Activated naive CD4-positive, alpha-beta T cell treated with anti-CD3 and anti-CD28 coated beads, Interleukin-2, amount 10 ng/mL, durations not matched to agents 7 days and 5 days (primary cell): ENCODE measurements at regions of chr10 and their contacts with region 1.

Region 1: GRCh38 chr10:70363971-70364771 is 18.3 kb downstream of the LRRC20 start:
- DNase-seq: peak; percentile 90
- H3K4me3 Mint-ChIP-seq: no peak overlapping the region
- H3K27ac Mint-ChIP-seq: no peak overlapping the region
- H3K4me1 Mint-ChIP-seq: peaks cover 10% of the 10 kb centered on the region
- H3K27me3 Mint-ChIP-seq: no peaks in the 10 kb centered on the region

Region 2: GRCh38 chr10:70146489-70147258 is 217.5 kb before region 1 on chr10 and contains the start of gene TYSND1:
- CTCF ChIA-PET with region 1: interaction called, 15 read pairs
- DNase-seq: peak; percentile 97
- H3K4me3 Mint-ChIP-seq: peak within 1 kb of the TSS; percentile 80
- H3K27ac Mint-ChIP-seq: peak within 1 kb of the TSS; percentile 93
- H3K4me1 Mint-ChIP-seq: peaks cover 25% of the 10 kb centered on the region
- H3K27me3 Mint-ChIP-seq: no peaks in the 10 kb centered on the region

Region 3: DNA sequence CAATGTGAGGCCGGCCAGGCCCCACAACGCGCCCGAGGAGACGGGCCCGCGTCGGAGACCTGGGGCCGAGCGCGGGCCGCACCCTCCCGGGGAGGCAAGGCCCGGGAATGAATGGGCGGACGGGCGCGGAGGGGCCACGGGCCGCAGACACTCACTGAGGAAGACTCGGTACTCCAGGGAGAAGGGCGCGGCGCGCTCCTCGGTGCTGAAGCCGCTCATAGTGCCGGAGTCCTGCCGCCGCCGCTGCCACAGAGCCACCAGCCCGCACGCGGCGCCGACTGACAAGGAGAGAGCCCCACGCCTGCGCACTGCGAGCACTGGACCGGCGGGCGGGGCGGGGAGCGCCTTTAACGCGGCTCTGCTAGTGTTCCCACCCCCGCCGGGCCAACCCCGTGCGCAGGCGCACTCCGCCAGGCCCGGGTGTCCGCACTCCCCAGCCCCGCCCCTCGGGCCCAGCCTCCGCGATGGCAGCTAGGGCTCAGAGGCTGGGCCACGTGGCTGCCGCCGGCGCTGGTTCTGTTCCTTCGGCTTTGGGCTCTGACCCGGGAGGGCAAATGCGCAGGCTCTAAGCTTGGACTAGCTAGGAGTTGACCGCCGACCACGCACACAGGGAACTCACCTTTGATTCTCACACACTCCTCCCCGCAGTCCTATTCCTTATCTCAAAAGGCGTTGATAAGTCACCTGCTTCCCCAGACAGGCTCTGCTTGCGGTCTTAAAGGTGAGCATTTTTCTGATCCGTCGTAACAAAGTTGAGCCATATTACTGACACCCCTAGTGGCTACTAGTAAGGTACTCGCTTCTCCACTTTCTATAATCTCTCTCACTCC is 130.8 kb before region 1 on chr10 and contains the start of gene PPA1:
- CTCF ChIA-PET with region 1: interaction called, 21 read pairs
- DNase-seq: peak; percentile 99
- H3K4me3 Mint-ChIP-seq: peak within 1 kb of the TSS; percentile 73
- H3K27ac Mint-ChIP-seq: peak within 1 kb of the TSS; percentile 85
- H3K4me1 Mint-ChIP-seq: peaks cover 44% of the 10 kb centered on the region
- H3K27me3 Mint-ChIP-seq: no peaks in the 10 kb centered on the region

Region 4: GRCh38 chr10:70247360-70247759 is 116.8 kb before region 1 on chr10:
- CTCF ChIA-PET with region 1: no interaction called
- DNase-seq: no peak
- H3K4me3 Mint-ChIP-seq: no peak overlapping the region
- H3K27ac Mint-ChIP-seq: no peak overlapping the region
- H3K4me1 Mint-ChIP-seq: no peaks in the 10 kb centered on the region
- H3K27me3 Mint-ChIP-seq: peaks cover 52% of the 10 kb centered on the region

Region 5: GRCh38 chr10:70348228-70348850 is 15.8 kb before region 1 on chr10:
- CTCF ChIA-PET with region 1: interaction called, 26 read pairs
- DNase-seq: peak; percentile 39
- H3K4me3 Mint-ChIP-seq: no peak overlapping the region
- H3K27ac Mint-ChIP-seq: no peak overlapping the region
- H3K4me1 Mint-ChIP-seq: no peaks in the 10 kb centered on the region
- H3K27me3 Mint-ChIP-seq: no peaks in the 10 kb centered on the region

Region 6: DNA sequence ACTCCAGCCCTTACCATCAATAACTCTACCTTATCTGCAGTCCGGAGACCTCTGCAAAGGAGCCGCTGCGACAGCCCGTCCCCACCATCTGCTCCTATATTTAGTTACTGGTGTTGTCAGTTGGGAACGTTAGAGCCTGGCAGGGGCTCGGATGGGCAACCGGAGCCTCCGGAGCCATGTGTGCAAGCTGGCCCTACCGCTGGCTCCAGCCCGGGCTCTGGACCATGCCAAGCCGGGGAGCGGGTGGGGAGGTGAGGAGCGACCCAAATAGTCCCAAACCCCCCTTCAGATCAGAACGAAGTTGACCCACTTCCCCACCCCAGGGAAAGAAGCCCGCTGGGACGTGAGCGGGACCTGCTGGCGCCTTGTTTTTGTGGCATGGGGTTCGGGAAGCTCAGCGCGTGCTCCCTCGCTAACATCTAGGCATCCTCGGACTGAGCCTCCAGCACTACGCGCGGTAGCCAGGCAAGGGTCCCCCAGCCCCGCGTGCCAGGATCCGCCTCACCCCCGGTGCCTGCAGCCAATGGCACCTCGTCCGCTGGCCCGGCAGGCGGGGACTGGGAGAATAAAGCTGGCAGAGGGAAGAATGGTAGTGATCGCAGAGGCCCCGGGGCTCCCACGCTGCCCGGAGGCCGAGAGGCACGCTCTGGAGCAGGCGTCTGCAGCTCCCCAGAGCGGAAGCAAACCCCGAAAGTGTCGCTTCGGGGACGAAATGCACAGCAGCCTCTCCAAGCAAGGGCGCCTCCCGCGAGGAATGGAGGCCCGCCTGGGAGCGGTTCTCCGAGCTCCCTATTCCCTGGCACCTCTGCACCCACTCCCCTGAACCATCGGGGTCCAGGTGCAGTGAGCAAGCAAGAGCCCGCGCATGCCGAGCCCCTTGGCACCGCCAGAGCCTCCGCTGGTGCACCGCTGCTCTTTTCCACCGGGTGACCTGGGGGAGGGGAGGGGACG is 17.6 kb after region 1 on chr10:
- CTCF ChIA-PET with region 1: interaction called, 14 read pairs
- DNase-seq: peak; percentile 67
- H3K4me3 Mint-ChIP-seq: peak overlapping the region; percentile 84
- H3K27ac Mint-ChIP-seq: peak overlapping the region; percentile 80
- H3K4me1 Mint-ChIP-seq: peaks cover 19% of the 10 kb centered on the region
- H3K27me3 Mint-ChIP-seq: peaks cover 16% of the 10 kb centered on the region

Region 7: GRCh38 chr10:70430493-70431445 is 66.6 kb after region 1 on chr10:
- CTCF ChIA-PET with region 1: no interaction called
- DNase-seq: no peak
- H3K4me3 Mint-ChIP-seq: no peak overlapping the region
- H3K27ac Mint-ChIP-seq: no peak overlapping the region
- H3K4me1 Mint-ChIP-seq: peaks cover 39% of the 10 kb centered on the region
- H3K27me3 Mint-ChIP-seq: no peaks in the 10 kb centered on the region